Naive thymus-derived CD4-positive, alpha-beta T cell (primary cell): ENCODE measurements at regions of chr1 and their contacts with region 1.

Region 1: GRCh38 chr1:160681067-160681890 is 30.3 kb downstream of the CD48 start:
- DNase-seq: peak; percentile 77 to 90 (median 87)
- ATAC-seq: peak; percentile 98
- H3K4me3 ChIP-seq: no peak overlapping the region
- H3K4me3 Mint-ChIP-seq: peak overlapping the region in 3 of 10 donors; percentile 1 to 70 (median 68)
- H3K27ac ChIP-seq: peak overlapping the region; percentile 65
- H3K27ac Mint-ChIP-seq: peak overlapping the region; percentile 76 to 96 (median 90)
- H3K4me1 ChIP-seq: peaks cover 47% of the 10 kb centered on the region in 2 donors
- H3K4me1 Mint-ChIP-seq: peaks cover 51 to 91% (median 52%) of the 10 kb centered on the region in 7 donors
- H3K27me3 ChIP-seq: no peaks in the 10 kb centered on the region
- H3K27me3 Mint-ChIP-seq: no peaks in the 10 kb centered on the region

Region 2: GRCh38 chr1:160618763-160619274 is 62.5 kb before region 1 on chr1:
- CTCF ChIA-PET with region 1: interaction called, 67 read pairs
- POLR2A ChIA-PET with region 1: interaction called, 3 read pairs
- intact Hi-C with region 1: no loop called
- DNase-seq: peak in 6 of 9 donors; percentile 34 to 49 (median 46)
- ATAC-seq: peak; percentile 83
- H3K4me3 ChIP-seq: no peak overlapping the region
- H3K4me3 Mint-ChIP-seq: peak overlapping the region in 3 of 10 donors; percentile 2 to 46 (median 24)
- H3K27ac ChIP-seq: no peak overlapping the region
- H3K27ac Mint-ChIP-seq: peak overlapping the region; percentile 21 to 83 (median 69)
- H3K4me1 ChIP-seq: peaks cover 23% of the 10 kb centered on the region in 2 donors
- H3K4me1 Mint-ChIP-seq: peaks cover 32 to 84% (median 68%) of the 10 kb centered on the region in 7 donors
- H3K27me3 ChIP-seq: no peaks in the 10 kb centered on the region
- H3K27me3 Mint-ChIP-seq: no peaks in the 10 kb centered on the region

Region 3: GRCh38 chr1:160711602-160712311 is 30.5 kb after region 1 on chr1 and contains the start of gene CD48:
- CTCF ChIA-PET with region 1: interaction called, 19 read pairs
- POLR2A ChIA-PET with region 1: interaction called, 18 read pairs
- intact Hi-C with region 1: loop called (anchors 1 kb)
- DNase-seq: peak in 8 of 9 donors; percentile 39 to 88 (median 82)
- ATAC-seq: peak; percentile 67
- H3K4me3 ChIP-seq: peak within 1 kb of the TSS; percentile 90
- H3K4me3 Mint-ChIP-seq: no peak within 1 kb of the TSS
- H3K27ac ChIP-seq: peak within 1 kb of the TSS; percentile 99
- H3K27ac Mint-ChIP-seq: no peak within 1 kb of the TSS
- H3K4me1 ChIP-seq: peaks cover 52 to 60% of the 10 kb centered on the region in 2 donors
- H3K4me1 Mint-ChIP-seq: peaks cover 22 to 49% (median 44%) of the 10 kb centered on the region in 7 donors
- H3K27me3 ChIP-seq: no peaks in the 10 kb centered on the region
- H3K27me3 Mint-ChIP-seq: no peaks in the 10 kb centered on the region
- total RNA-seq, gene CD48: 253 to 438 (median 358) TPM

Region 4: GRCh38 chr1:160768295-160768657 is 87.0 kb after region 1 on chr1:
- CTCF ChIA-PET with region 1: interaction called, 104 read pairs
- POLR2A ChIA-PET with region 1: interaction called, 10 read pairs
- intact Hi-C with region 1: loop called (anchors 1 kb)
- DNase-seq: peak; percentile 66 to 89 (median 82)
- ATAC-seq: peak; percentile 98
- H3K4me3 ChIP-seq: peak overlapping the region; percentile 48
- H3K4me3 Mint-ChIP-seq: peak overlapping the region; percentile 61 to 94 (median 82)
- H3K27ac ChIP-seq: peak overlapping the region; percentile 56
- H3K27ac Mint-ChIP-seq: peak overlapping the region; percentile 89 to 99 (median 96)
- H3K4me1 ChIP-seq: peaks cover 16% of the 10 kb centered on the region in 2 donors
- H3K4me1 Mint-ChIP-seq: peaks cover 19 to 29% (median 21%) of the 10 kb centered on the region in 7 donors
- H3K27me3 ChIP-seq: no peaks in the 10 kb centered on the region
- H3K27me3 Mint-ChIP-seq: no peaks in the 10 kb centered on the region

Region 5: GRCh38 chr1:160877221-160877620 is 195.9 kb after region 1 on chr1:
- CTCF ChIA-PET with region 1: interaction called, 6 read pairs
- POLR2A ChIA-PET with region 1: no interaction called
- intact Hi-C with region 1: loop called in 1 of 2 experiments (anchors 1 kb)
- DNase-seq: peak in 7 of 9 donors; percentile 32 to 72 (median 50)
- ATAC-seq: peak; percentile 83
- H3K4me3 ChIP-seq: no peak overlapping the region
- H3K4me3 Mint-ChIP-seq: peak overlapping the region in 2 of 10 donors; percentile 1 to 4
- H3K27ac ChIP-seq: no peak overlapping the region
- H3K27ac Mint-ChIP-seq: peak overlapping the region in 4 of 9 donors; percentile 5 to 15 (median 10)
- H3K4me1 ChIP-seq: peaks cover 8 to 10% of the 10 kb centered on the region in 2 donors
- H3K4me1 Mint-ChIP-seq: peaks cover 15 to 28% (median 23%) of the 10 kb centered on the region in 7 donors
- H3K27me3 ChIP-seq: no peaks in the 10 kb centered on the region
- H3K27me3 Mint-ChIP-seq: peaks cover 0 to 11% (median 0%) of the 10 kb centered on the region in 5 donors

Region 6: GRCh38 chr1:160951443-160952128 is 270.3 kb after region 1 on chr1:
- CTCF ChIA-PET with region 1: interaction called, 22 read pairs
- POLR2A ChIA-PET with region 1: interaction called, 3 read pairs
- intact Hi-C with region 1: loop called (anchors 1 kb)
- DNase-seq: peak; percentile 53 to 80 (median 71)
- ATAC-seq: peak; percentile 92
- H3K4me3 ChIP-seq: no peak overlapping the region
- H3K4me3 Mint-ChIP-seq: no peak overlapping the region
- H3K27ac ChIP-seq: no peak overlapping the region
- H3K27ac Mint-ChIP-seq: peak overlapping the region in 2 of 9 donors; percentile 26 to 48
- H3K4me1 ChIP-seq: peaks cover 0 to 16% of the 10 kb centered on the region in 2 donors
- H3K4me1 Mint-ChIP-seq: peaks cover 6 to 21% (median 11%) of the 10 kb centered on the region in 7 donors
- H3K27me3 ChIP-seq: no peaks in the 10 kb centered on the region
- H3K27me3 Mint-ChIP-seq: no peaks in the 10 kb centered on the region